ENCODE measurements at regions of chr11 and their contacts with region 1.

Region 1: GRCh38 chr11:5204787-5205186 is 4.3 kb upstream of the OR51V1 start:
- DNase-seq: peak; percentile 68
- ATAC-seq: peak; percentile 99
- H3K4me3 ChIP-seq: no peak overlapping the region
- H3K27ac ChIP-seq: no peak overlapping the region
- H3K4me1 ChIP-seq: no peaks in the 10 kb centered on the region
- H3K27me3 ChIP-seq: peaks cover 32% of the 10 kb centered on the region
- CTCF ChIP-seq: peak; percentile 54 to 79 (median 77)
- POLR2A ChIP-seq: no peak
- RAD21 ChIP-seq: peak; percentile 94

Region 2: GRCh38 chr11:5242933-5243815 is 38.4 kb after region 1 on chr11:
- CTCF ChIA-PET with region 1: no interaction called
- POLR2A ChIA-PET with region 1: no interaction called
- RAD21 ChIA-PET with region 1: no interaction called
- intact Hi-C with region 1: no loop called
- DNase-seq: no peak
- ATAC-seq: no peak
- H3K4me3 ChIP-seq: no peak overlapping the region
- H3K27ac ChIP-seq: no peak overlapping the region
- H3K4me1 ChIP-seq: no peaks in the 10 kb centered on the region
- H3K27me3 ChIP-seq: peaks cover 87% of the 10 kb centered on the region
- CTCF ChIP-seq: no peak
- POLR2A ChIP-seq: no peak
- RAD21 ChIP-seq: no peak

Region 3: DNA sequence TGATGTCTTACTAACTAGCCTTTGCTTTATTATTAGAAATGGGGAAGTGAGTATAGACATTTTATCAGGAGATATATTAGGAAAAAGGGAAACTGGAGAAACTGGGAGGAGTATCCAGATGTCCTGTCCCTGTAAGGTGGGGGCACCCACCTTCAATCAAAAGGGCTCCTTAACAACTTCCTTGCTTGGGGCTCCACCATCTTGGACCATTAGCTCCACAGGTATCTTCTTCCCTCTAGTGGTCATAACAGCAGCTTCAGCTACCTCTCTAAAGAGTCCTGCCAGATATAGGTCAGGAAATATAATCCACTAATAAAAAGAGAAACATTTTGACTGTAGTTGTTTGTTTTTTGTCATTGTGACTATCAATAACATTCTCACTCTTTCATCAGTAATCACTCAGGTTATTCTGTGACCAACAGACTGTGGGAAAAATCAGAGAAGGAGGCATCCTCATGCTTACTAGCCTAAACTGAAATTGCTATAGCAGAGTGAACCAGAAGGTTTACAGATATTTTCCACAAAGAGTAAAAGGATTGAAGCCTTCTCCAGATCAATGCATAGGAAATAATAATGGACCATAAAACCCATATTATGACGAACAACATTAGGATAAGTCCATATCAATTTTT is 86.5 kb after region 1 on chr11:
- CTCF ChIA-PET with region 1: interaction called, 5 read pairs
- POLR2A ChIA-PET with region 1: no interaction called
- RAD21 ChIA-PET with region 1: no interaction called
- intact Hi-C with region 1: loop called (anchors 1 kb)
- DNase-seq: peak; percentile 35
- ATAC-seq: peak; percentile 91
- H3K4me3 ChIP-seq: no peak overlapping the region
- H3K27ac ChIP-seq: no peak overlapping the region
- H3K4me1 ChIP-seq: peaks cover 0 to 5% of the 10 kb centered on the region in 2 experiments; a peak in 1 of 4 replicates
- H3K27me3 ChIP-seq: no peaks in the 10 kb centered on the region
- CTCF ChIP-seq: peak; percentile 71 to 87 (median 79)
- POLR2A ChIP-seq: no peak
- RAD21 ChIP-seq: peak; percentile 82

Region 4: GRCh38 chr11:5380740-5381342 is 176.1 kb after region 1 on chr11:
- CTCF ChIA-PET with region 1: no interaction called
- POLR2A ChIA-PET with region 1: no interaction called
- RAD21 ChIA-PET with region 1: no interaction called
- intact Hi-C with region 1: loop called (anchors 1 kb)
- DNase-seq: peak; percentile 36
- ATAC-seq: peak; percentile 92
- H3K4me3 ChIP-seq: no peak overlapping the region
- H3K27ac ChIP-seq: no peak overlapping the region; the same call in 1 of the 2 replicates
- H3K4me1 ChIP-seq: peaks cover 0 to 16% of the 10 kb centered on the region in 2 experiments; a peak in 1 of 4 replicates
- H3K27me3 ChIP-seq: no peaks in the 10 kb centered on the region
- CTCF ChIP-seq: peak; percentile 45 to 82 (median 78); a peak in 5 of 6 replicates
- POLR2A ChIP-seq: no peak
- RAD21 ChIP-seq: peak; percentile 64

Region 5: DNA sequence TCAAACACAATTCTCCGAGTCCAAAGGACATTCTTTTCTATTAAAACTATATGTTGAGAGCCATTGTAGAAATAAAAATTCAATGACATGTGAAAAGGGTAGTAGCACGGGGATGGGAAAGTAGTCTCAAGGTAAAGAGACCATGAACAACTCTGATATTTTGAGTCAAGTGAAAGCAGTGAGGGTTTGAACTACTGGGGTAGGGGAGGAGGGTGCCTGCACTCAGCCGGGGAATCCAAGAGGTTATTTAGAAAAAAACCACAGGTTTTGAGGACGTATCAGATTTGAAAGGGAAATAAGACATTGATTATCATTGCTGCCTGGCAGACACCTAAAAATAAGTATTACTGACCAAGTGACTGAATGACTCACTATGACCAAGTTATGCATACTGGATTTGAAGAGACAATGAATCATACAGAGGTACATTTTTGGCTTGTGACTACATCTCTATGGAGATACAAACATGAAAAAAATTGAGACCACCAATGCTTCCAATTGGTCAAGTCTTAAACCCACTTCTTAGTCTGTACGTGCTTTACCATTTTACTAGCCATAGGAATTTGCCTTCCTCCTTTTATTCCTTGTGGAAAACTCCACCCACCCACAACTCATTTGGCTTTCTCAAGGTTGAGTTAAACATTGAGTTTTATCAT is 345.8 kb after region 1 on chr11:
- CTCF ChIA-PET with region 1: no interaction called
- POLR2A ChIA-PET with region 1: no interaction called
- RAD21 ChIA-PET with region 1: no interaction called
- intact Hi-C with region 1: loop called (anchors 10 kb)
- DNase-seq: peak; percentile 54
- ATAC-seq: peak; percentile 82
- H3K4me3 ChIP-seq: peak overlapping the region in 1 of 2 experiments; percentile 8; a peak in 1 of 4 replicates
- H3K27ac ChIP-seq: no peak overlapping the region
- H3K4me1 ChIP-seq: peaks cover 3 to 13% of the 10 kb centered on the region in 2 experiments
- H3K27me3 ChIP-seq: peaks cover 16% of the 10 kb centered on the region
- CTCF ChIP-seq: no peak
- POLR2A ChIP-seq: no peak
- RAD21 ChIP-seq: no peak